Activated T-helper 1 cell treated with anti-CD3 and anti-CD28 coated beads, Interleukin-12 subunit alpha, Interleukin-12 subunit beta, Interleukin-2, Interleukin-4 antibody, amounts not matched to agents 30 ng/mL and 10 ng/mL and 1 ng/mL, durations not matched to agents 14 hours and 24 hours and 36 hours (primary cell): ENCODE measurements at regions of chr6 and their contacts with region 1.

Region 1: GRCh38 chr6:113858480-113859348 is 1.6 kb downstream of the MARCKS start:
- DNase-seq: peak; percentile 74
- H3K4me3 Mint-ChIP-seq: peak overlapping the region; percentile 81
- H3K27ac Mint-ChIP-seq: peak overlapping the region; percentile 52
- H3K4me1 Mint-ChIP-seq: peaks cover 16% of the 10 kb centered on the region
- H3K27me3 Mint-ChIP-seq: peaks cover 42% of the 10 kb centered on the region

Region 2: DNA sequence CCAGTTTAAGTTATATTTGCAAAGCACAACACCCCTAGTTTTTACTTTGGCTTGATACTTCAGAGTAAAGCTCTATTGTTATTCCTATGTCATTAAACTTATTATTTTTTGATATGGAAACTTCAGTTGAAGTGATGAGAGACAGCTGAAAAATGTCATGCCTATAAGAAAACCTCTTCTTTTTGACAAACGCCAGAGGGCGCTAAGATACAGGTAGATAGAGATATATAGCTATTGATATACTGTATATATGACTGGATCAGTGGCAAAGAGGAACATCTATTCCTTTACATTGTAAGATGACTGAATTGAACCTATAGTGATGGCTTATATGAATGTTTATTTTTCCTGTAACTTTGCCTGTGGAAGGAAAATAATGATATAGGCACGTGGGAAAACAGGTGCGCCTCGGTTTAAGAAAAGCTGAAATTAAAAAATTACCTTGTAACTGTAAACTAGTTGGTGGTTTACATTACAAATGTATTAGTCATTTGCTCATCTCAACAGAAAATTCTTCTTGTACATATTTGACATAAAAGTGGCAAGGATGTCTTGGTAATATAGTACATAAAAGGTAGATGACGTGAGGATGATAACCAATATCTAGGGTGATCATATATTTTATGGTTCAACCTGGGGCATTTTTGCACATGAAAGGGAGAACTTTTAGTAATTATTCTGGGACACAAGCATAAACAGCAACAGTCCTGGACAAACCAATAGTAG is 1678.5 kb before region 1 on chr6:
- intact Hi-C with region 1: loop called (anchors 1 kb)
- DNase-seq: peak; percentile 34
- H3K4me3 Mint-ChIP-seq: no peak overlapping the region
- H3K27ac Mint-ChIP-seq: no peak overlapping the region
- H3K4me1 Mint-ChIP-seq: no peaks in the 10 kb centered on the region
- H3K27me3 Mint-ChIP-seq: peaks cover 21% of the 10 kb centered on the region

Region 3: DNA sequence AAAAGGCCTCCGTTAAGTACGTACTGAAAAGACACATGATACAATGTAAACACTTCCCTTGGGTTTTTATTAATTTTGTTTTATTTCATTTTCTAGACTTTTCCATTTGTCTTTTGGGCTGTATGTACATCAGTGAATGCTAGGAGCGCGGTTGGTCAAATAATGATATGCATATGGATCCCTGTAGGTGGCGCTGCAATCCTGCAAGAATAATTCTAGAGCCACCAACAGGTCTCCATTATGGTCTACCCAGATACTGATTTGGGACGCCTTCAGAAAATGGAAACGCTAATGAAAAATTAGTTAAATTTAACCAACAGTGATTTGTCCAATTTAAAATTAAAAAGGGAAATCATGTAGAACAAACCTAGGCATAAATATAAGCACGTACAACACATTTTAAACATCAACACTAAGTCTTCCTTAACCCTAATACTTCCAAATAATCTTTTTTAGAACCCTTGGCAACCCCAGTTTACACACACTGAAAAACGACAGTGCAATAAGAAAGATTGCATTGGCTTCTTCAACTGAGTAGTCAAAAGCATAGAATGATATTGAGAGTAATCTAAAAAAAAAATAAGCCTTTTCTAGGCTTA is 1078.1 kb before region 1 on chr6:
- intact Hi-C with region 1: loop called (anchors 1 kb)
- DNase-seq: no peak
- H3K4me3 Mint-ChIP-seq: no peak overlapping the region
- H3K27ac Mint-ChIP-seq: no peak overlapping the region
- H3K4me1 Mint-ChIP-seq: no peaks in the 10 kb centered on the region
- H3K27me3 Mint-ChIP-seq: no peaks in the 10 kb centered on the region

Region 4: DNA sequence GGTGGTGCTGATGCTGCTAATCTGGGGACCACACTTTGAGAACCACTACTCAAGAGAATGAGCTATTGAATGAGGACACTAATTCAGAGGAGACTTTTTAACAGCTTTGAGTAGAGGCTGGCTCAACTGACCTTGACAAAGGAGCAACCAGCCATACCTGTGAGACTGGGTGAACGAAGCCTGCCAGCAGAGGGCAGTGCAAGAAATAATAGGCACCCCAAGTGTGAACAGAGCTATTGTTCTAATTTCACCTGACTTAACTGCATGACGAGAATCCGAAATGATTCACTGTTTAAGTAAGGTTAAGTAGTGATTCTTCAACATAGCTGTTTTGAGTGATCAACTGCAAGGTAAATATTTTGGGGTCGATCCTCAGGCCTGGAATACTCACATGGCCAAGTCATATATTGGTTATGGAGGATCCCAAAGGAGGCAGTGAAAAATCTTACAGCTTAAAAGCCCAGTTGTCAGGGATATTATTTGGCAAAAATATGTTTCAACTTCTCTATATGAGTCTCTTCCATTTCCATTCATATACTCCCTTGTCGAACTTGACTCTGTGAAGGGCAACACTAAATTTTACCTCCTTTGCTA is 552.1 kb before region 1 on chr6:
- intact Hi-C with region 1: loop called (anchors 1 kb)
- DNase-seq: peak; percentile 17
- H3K4me3 Mint-ChIP-seq: no peak overlapping the region
- H3K27ac Mint-ChIP-seq: no peak overlapping the region
- H3K4me1 Mint-ChIP-seq: no peaks in the 10 kb centered on the region
- H3K27me3 Mint-ChIP-seq: peaks cover 3% of the 10 kb centered on the region

Region 5: DNA sequence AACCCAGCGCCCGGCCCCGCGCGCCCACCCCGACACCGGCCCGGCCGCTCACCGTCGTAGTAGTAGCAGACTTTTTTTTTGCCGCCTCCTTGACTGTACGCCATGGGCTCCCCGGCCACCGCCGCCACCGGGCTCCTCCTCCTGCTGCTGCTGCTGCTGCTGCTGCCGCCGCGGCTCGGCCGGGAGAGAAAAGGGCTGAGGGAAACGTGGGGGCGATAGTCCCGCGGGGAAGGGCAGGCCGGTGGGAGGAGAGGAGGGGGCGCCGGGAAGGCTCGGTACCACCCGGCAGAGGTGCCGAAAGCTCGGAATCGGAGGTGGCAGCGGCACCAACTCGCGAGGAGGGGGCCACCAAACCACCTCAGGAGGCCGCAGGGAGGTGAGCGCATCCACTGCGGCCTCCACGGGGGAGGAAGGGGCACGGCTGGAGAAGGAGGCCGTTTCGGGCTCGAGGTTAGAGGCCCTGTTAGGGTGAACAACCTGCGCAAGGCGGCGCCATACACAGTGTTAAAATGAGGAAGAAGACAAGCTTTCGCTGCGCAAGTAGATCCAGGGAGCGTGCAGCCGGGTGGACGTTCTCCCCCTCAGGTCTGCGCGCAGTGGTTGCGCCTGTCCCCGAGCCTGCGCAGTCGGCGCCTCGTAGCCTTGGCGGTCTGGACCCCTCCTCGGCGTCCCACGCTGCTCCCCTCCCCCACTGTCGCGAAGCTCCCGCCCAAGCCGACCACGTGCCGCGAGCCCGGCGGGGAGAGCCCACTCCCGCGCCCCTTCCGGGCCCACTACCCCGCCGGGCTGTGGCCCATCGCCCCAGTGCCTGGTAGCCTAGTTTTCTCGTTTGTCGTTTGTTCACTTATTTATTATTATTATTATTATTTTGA is 112.3 kb after region 1 on chr6 and contains the start of gene HDAC2:
- intact Hi-C with region 1: loop called (anchors 5 kb)
- DNase-seq: peak; percentile 80
- H3K4me3 Mint-ChIP-seq: peak within 1 kb of the TSS; percentile 97
- H3K27ac Mint-ChIP-seq: peak within 1 kb of the TSS; percentile 96
- H3K4me1 Mint-ChIP-seq: peaks cover 34% of the 10 kb centered on the region
- H3K27me3 Mint-ChIP-seq: peaks cover 4% of the 10 kb centered on the region
- total RNA-seq, gene HDAC2: 125 and 128 TPM in 2 replicates